Activated CD4-positive, alpha-beta memory T cell treated with anti-CD3 and anti-CD28 coated beads for 36 hours (primary cell): ENCODE measurements at regions of chr2 and their contacts with region 1.

Region 1: DNA sequence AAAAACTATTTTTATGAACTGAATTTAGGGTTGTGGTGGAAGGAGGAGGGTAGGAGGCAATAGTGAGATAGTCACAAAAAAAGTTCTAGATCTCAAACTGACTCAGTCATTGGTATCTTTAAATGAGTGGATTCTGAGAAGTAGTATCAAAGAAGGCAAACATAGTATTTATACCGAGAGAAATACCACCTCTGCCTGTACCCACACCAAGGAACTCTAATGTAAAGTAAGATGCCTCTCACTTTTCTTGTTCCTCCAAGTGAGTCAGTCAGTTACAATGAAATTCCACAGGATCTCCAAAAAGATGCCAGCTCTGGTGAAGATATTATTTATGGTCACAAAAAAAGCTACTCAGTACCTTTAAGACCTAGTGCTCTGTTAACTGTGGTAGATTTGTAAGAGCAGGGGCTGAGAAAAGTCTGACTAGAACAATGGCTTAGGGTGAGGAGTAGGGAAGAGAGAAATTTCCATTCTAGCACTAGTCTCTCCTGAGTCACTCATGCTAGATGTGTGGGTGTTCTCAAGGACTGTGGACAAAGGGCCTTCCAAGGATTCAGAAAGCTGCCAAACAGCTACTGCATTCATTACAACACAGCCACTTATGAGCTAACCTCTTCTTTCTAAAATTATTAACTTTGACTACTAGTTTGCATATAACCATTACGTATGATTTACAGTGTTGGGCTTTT is 36.3 kb downstream of the YWHAQ start:
- DNase-seq: no peak
- H3K4me3 Mint-ChIP-seq: no peak overlapping the region
- H3K27ac Mint-ChIP-seq: peak overlapping the region; percentile 83
- H3K4me1 Mint-ChIP-seq: peaks cover 81% of the 10 kb centered on the region
- H3K27me3 Mint-ChIP-seq: no peaks in the 10 kb centered on the region

Region 2: DNA sequence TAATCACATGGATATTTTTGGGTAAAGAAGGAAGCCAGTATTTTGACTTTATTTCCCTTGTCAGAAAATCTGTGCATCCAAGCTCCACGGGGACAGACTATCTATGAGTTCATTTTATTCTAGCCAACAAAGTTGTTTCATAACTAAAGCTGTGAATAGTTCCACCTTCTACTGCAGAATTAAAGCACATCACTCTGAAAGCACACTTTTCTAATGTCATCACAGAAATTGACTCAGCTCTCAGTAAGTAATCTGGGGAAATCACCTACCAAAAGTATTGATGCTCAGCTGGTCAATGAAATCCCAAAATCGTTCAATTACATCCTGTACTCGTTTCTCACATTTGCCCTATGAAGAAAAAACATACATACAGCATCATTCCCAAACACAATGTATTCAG is 101.0 kb before region 1 on chr2:
- CTCF ChIA-PET with region 1: no interaction called
- POLR2A ChIA-PET with region 1: interaction called, 3 read pairs
- intact Hi-C with region 1: loop called (anchors 2 kb)
- DNase-seq: no peak
- H3K4me3 Mint-ChIP-seq: no peak overlapping the region
- H3K27ac Mint-ChIP-seq: peak overlapping the region; percentile 80
- H3K4me1 Mint-ChIP-seq: peaks cover 52% of the 10 kb centered on the region
- H3K27me3 Mint-ChIP-seq: no peaks in the 10 kb centered on the region

Region 3: DNA sequence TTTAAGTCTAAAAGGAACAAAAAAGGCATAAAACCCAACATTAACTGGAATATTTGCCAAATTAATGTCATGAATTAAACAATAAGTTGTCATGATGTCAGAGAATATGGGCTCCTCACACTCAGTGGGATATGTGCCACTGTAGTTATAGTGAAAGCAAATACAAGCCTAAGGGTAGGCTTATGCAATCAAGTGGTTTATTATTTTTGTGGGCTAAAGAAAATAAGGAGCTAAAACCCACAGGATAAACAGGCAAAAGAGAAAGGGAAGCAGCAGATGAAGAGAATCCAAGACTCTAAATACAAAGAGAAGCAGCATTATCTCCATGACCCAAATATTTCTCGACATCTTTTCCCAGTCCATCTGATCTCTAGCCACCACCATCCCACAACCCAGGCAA is 18.8 kb after region 1 on chr2:
- CTCF ChIA-PET with region 1: interaction called, 16 read pairs
- POLR2A ChIA-PET with region 1: interaction called, 32 read pairs
- intact Hi-C with region 1: loop called (anchors 1 kb)
- DNase-seq: no peak
- H3K4me3 Mint-ChIP-seq: no peak overlapping the region
- H3K27ac Mint-ChIP-seq: no peak overlapping the region
- H3K4me1 Mint-ChIP-seq: peaks cover 90% of the 10 kb centered on the region
- H3K27me3 Mint-ChIP-seq: no peaks in the 10 kb centered on the region

Region 4: DNA sequence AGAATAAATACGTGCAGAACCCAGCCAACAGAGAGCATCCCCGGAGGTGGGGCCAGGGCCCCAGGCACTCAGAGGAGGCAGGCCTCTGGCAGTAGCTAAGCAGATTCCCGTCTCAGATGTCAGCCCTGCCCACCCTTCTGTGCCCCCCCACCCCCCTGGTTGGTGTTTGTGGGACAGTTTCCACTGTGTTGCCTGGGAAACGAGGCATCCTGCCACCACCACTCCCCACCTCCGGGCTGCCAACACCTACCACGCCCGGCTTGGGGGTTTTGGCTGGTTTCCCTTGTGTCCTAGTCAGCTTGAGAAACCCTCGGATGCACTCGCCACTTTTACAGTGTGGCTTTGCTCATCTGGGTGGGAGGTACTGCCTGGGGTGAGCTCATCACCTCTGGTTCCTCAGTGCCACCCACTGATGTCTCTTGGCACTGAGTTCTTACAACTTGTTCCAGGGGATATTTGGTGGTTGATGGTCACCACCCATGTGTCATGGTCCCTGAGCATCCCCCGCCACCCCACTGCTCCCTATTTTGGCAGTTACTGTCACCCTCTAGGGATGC is 108.7 kb after region 1 on chr2:
- CTCF ChIA-PET with region 1: no interaction called
- POLR2A ChIA-PET with region 1: interaction called, 6 read pairs
- intact Hi-C with region 1: loop called (anchors 1 kb)
- DNase-seq: peak; percentile 95
- H3K4me3 Mint-ChIP-seq: no peak overlapping the region
- H3K27ac Mint-ChIP-seq: peak overlapping the region; percentile 75
- H3K4me1 Mint-ChIP-seq: peaks cover 54% of the 10 kb centered on the region
- H3K27me3 Mint-ChIP-seq: peaks cover 3% of the 10 kb centered on the region

Region 5: GRCh38 chr2:9739531-9739964 is 145.0 kb after region 1 on chr2:
- CTCF ChIA-PET with region 1: no interaction called
- POLR2A ChIA-PET with region 1: no interaction called
- intact Hi-C with region 1: loop called (anchors 1 kb)
- DNase-seq: peak; percentile 77
- H3K4me3 Mint-ChIP-seq: peak overlapping the region; percentile 75
- H3K27ac Mint-ChIP-seq: peak overlapping the region; percentile 89
- H3K4me1 Mint-ChIP-seq: peaks cover 52% of the 10 kb centered on the region
- H3K27me3 Mint-ChIP-seq: no peaks in the 10 kb centered on the region